Left lung (tissue), 14 donors: ENCODE measurements at regions of chr14 and their contacts with region 1.

Region 1: GRCh38 chr14:65412032-65412846 is at the start of gene FUT8:
- DNase-seq: peak; percentile 95 to 98 (median 96)
- ATAC-seq: peak; percentile 91
- H3K4me3 ChIP-seq: peak within 1 kb of the TSS; percentile 86
- H3K27ac ChIP-seq: peak within 1 kb of the TSS; percentile 94 to 96
- H3K4me1 ChIP-seq: peaks cover 5 to 26% of the 10 kb centered on the region in 2 donors
- H3K27me3 ChIP-seq: no peaks in the 10 kb centered on the region
- CTCF ChIP-seq: peak; percentile 25 to 41
- polyA plus RNA-seq, gene FUT8: 28.7 to 35.0 (median 32.0) TPM

Region 2: DNA sequence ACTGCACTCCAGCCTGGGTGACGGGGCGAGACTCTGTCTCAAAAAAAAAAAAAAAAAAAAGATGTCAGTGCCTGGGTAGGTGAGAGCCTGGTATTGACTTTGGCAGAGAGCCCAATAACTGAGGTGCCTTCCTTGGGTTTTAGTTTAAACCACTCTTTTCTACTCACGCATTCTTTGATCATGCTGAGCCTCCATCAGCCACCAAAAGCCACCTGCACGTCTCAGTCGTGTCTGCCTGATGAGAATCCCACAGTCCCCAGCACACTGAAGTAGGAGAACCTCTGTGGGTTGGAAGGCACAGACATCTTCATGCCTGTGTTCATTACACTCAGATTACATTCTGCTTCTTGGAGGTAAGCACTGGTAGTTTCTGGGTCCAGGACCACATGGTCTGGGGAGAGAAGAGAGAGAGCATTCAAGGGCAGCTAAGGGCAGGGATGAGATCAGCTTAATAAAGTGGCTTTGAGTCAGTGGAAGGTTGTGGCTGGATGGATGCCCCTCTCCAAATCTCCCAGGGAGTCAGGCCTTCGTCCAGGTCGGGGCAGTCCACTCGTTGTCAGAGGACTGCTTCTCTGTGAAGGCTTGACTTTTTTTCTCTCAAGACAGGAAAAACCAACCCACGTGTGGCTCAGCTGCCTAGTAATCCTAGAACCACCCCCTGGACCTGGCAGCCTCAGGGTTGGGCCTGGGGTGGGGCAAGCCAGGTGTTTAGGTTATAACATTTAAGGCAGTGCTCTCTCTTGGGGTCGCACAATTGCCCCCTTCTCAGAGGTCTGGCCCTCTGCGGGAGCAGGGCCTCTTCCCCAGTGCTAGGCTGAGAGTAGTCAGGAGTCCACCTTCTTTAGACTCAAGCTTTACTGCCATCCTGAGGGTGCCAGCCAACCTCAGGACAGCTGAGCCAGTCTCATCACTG is 277.3 kb before region 1 on chr14:
- intact Hi-C with region 1: no loop called
- DNase-seq: no peak
- ATAC-seq: peak; percentile 41
- H3K4me3 ChIP-seq: no peak overlapping the region
- H3K27ac ChIP-seq: no peak overlapping the region
- H3K4me1 ChIP-seq: no peaks in the 10 kb centered on the region
- H3K27me3 ChIP-seq: no peaks in the 10 kb centered on the region
- CTCF ChIP-seq: no peak

Region 3: DNA sequence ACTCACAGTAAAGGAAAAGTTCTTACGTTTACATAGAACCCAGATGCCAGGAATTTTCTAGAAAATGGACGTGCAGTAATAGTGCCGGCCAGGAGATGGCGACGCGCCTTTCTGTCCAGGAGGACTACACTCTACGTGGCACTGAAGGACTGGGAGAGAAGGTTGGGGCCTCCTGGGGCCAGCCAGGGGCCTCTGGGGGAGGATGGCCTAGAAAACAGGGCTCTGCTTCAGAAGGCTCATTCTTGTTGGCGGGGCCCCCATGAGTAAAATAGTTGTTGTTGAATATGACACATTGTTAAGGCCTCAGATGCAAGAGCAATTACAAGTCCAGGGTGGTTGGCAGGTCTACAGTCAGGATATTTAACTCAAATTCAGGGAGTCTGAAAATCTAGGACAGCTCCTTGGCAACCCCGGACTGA is 189.8 kb before region 1 on chr14:
- intact Hi-C with region 1: loop called in 1 of 2 experiments (anchors 10 kb)
- DNase-seq: peak in 1 of 4 donors; percentile 85
- ATAC-seq: peak; percentile 92
- H3K4me3 ChIP-seq: no peak overlapping the region
- H3K27ac ChIP-seq: no peak overlapping the region
- H3K4me1 ChIP-seq: peaks cover 0 to 15% of the 10 kb centered on the region in 2 donors
- H3K27me3 ChIP-seq: no peaks in the 10 kb centered on the region
- CTCF ChIP-seq: peak; percentile 50 to 75

Region 4: DNA sequence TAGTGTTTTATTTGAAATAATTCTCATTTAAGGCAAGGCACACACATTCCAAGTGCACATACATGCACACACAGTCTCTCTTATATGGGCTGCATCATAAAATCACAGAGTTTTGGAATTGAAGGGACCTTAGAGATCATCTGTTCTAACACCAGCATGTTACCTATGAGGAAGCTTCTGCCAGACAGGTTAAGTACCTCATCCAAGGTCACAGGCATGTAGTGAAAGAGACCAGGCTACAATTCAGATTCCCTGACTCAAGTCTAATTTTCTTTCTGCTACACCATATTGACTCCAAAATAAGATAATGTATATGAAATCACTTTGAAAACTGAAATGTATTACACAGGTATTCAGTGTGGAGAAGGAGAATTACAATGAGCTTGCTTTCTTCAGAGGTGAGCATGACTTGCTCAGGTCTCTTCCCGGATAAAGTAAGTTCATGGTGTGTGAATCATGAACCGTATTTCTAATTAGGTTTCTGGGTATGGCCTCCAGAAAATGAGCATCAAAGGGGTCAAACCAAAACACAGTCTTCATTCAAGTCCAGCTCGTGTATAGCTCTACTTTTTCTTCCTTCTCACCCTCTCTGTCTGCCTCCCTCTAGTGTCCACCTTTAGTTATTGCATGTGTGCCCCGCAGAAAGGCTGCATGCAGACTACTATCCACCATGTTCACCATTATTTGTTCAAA is 412.2 kb after region 1 on chr14:
- intact Hi-C with region 1: loop called in 1 of 2 experiments (anchors 10 kb)
- DNase-seq: peak in 2 of 4 donors; percentile 47 to 69
- ATAC-seq: peak; percentile 98
- H3K4me3 ChIP-seq: no peak overlapping the region
- H3K27ac ChIP-seq: no peak overlapping the region
- H3K4me1 ChIP-seq: no peaks in the 10 kb centered on the region
- H3K27me3 ChIP-seq: peaks cover 0 to 13% of the 10 kb centered on the region in 2 donors
- CTCF ChIP-seq: peak; percentile 88 to 91